Aorta (tissue), 5 donors: ENCODE measurements at regions of chr6 and their contacts with region 1.

Region 1: GRCh38 chr6:98395610-98396166 is 438.7 kb upstream of the POU3F2 start:
- DNase-seq: no peak
- ATAC-seq: no peak
- H3K4me3 ChIP-seq: no peak overlapping the region
- H3K27ac ChIP-seq: no peak overlapping the region
- H3K4me1 ChIP-seq: no peaks in the 10 kb centered on the region
- H3K27me3 ChIP-seq: no peaks in the 10 kb centered on the region

Region 2: GRCh38 chr6:98039869-98040607 is 355.6 kb before region 1 on chr6:
- intact Hi-C with region 1: loop called in 1 of 2 experiments (anchors 10 kb)
- DNase-seq: no peak
- ATAC-seq: no peak
- H3K4me3 ChIP-seq: no peak overlapping the region
- H3K27ac ChIP-seq: no peak overlapping the region
- H3K4me1 ChIP-seq: no peaks in the 10 kb centered on the region
- H3K27me3 ChIP-seq: peaks cover 0 to 1% of the 10 kb centered on the region in 2 donors